Activated CD4-positive, alpha-beta T cell treated with anti-CD3 and anti-CD28 coated beads for 36 hours (primary cell): ENCODE measurements at regions of chr4 and their contacts with region 1.

Region 1: GRCh38 chr4:77025643-77026321 is 50.0 kb downstream of the CCNI start:
- DNase-seq: peak; percentile 18
- ATAC-seq: peak; percentile 86
- H3K4me3 Mint-ChIP-seq: no peak overlapping the region
- H3K27ac Mint-ChIP-seq: no peak overlapping the region
- H3K4me1 Mint-ChIP-seq: peaks cover 42% of the 10 kb centered on the region
- H3K27me3 Mint-ChIP-seq: peaks cover 8% of the 10 kb centered on the region

Region 2: DNA sequence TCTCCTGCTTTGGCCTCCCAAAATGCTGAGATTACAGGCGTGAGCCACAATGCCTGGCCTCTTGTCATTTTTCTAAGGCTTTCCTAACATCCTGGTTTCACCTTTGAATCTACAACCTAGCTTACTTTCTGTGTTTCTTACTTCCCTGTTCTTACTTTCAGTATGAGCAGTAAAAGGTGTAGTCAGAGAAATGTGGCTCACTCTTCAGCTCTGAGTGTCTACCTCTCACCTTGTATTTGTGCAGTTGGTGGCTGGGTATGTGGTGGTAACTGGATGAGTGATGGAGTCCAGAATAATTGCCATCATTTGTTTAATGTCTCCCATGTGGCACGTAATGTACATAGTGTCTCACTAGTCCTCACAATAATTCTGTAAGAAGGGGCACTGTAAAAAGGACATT is 970.8 kb before region 1 on chr4:
- CTCF ChIA-PET with region 1: no interaction called
- POLR2A ChIA-PET with region 1: no interaction called
- intact Hi-C with region 1: loop called (anchors 1 to 5 kb)
- DNase-seq: peak; percentile 54
- ATAC-seq: peak; percentile 83
- H3K4me3 Mint-ChIP-seq: no peak overlapping the region
- H3K27ac Mint-ChIP-seq: no peak overlapping the region
- H3K4me1 Mint-ChIP-seq: peaks cover 44% of the 10 kb centered on the region
- H3K27me3 Mint-ChIP-seq: peaks cover 23% of the 10 kb centered on the region

Region 3: DNA sequence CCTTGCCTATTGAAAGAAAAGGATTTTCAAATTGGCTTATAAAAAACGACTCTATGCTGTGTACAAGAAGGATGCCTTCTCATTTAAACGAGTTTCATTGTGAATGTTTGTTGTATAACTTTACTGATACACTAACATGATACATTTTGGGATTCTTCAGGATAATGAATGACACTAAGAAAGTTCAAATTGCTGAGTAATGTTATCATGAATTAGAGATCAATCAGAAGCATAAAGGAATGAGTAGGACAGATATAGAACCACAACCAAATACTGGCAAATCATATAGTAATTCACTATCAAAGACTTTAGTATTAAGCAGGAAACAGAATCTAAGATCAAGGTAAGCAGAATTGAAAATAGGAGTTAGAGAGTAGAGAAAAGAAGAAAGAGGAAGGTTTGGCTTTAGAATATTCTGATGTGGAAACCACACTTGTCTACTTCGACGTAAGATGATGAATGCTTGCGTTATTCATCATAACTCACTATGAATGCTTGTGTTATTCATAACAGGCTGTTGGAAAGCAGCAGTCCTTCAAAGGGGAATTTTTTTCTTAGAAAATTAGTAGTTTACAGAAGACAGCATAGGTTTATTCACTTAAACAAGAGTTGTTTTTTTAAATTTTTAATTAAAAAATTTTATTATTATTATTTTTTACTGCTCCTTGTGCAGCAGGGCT is 618.2 kb before region 1 on chr4:
- CTCF ChIA-PET with region 1: no interaction called
- POLR2A ChIA-PET with region 1: no interaction called
- intact Hi-C with region 1: loop called in 1 of 2 experiments (anchors 5 kb)
- DNase-seq: no peak
- ATAC-seq: peak; percentile 84
- H3K4me3 Mint-ChIP-seq: no peak overlapping the region
- H3K27ac Mint-ChIP-seq: no peak overlapping the region
- H3K4me1 Mint-ChIP-seq: peaks cover 7% of the 10 kb centered on the region
- H3K27me3 Mint-ChIP-seq: peaks cover 8% of the 10 kb centered on the region

Region 4: DNA sequence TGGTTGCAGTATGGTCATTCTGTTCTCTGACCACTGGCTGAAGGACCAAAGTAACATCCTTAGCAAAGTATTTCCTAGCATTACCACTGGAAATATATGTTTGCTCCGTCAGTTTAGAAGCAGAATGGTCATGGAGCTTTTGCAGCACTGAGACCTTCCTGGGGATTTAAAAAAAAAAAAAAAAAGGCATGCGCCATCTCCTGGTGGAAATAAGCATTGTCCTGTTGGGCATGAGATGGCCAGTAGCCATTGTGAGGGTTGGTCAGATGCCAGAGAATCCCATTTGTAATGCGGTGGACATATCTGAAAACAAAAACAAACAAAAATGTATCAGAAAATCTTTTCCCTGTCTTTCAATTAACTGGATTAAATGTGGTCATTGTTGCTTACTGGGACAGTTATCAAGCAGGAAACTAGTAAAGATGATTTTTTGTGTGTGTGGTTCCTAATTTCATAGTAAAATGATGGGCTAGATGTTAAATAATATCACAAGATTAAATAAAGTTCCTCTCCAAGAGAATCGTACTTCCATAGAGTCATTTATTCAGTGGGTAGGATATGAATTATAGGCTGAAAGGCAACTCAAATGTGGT is 267.4 kb before region 1 on chr4:
- CTCF ChIA-PET with region 1: no interaction called
- POLR2A ChIA-PET with region 1: no interaction called
- intact Hi-C with region 1: loop called (anchors 5 kb)
- DNase-seq: no peak
- ATAC-seq: no peak
- H3K4me3 Mint-ChIP-seq: no peak overlapping the region
- H3K27ac Mint-ChIP-seq: no peak overlapping the region
- H3K4me1 Mint-ChIP-seq: peaks cover 14% of the 10 kb centered on the region
- H3K27me3 Mint-ChIP-seq: peaks cover 11% of the 10 kb centered on the region

Region 5: GRCh38 chr4:76960014-76960413 is 65.8 kb before region 1 on chr4:
- CTCF ChIA-PET with region 1: no interaction called
- POLR2A ChIA-PET with region 1: no interaction called
- intact Hi-C with region 1: loop called (anchors 1 kb)
- DNase-seq: no peak
- ATAC-seq: peak; percentile 90
- H3K4me3 Mint-ChIP-seq: no peak overlapping the region
- H3K27ac Mint-ChIP-seq: no peak overlapping the region
- H3K4me1 Mint-ChIP-seq: peaks cover 23% of the 10 kb centered on the region
- H3K27me3 Mint-ChIP-seq: peaks cover 4% of the 10 kb centered on the region

Region 6: DNA sequence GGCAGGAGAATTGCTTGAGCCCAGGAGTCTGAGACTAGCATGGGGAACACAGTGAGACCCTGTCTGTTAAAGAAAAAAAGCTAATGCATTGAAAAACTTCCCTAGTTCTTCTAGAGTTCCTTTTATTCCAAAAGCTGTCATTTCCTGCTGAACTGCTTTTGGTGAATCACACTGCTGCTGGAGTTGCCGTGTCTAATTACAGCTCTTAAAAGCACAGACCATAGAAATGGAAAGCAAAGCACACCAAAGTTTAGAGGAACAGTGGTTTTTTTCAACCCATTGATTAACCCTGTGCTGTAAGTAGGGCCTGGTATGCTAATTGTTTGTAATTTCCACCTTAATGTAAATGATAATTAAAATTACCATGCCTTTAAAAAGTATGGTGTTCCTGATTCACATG is 23.9 kb before region 1 on chr4:
- CTCF ChIA-PET with region 1: interaction called, 3 read pairs
- POLR2A ChIA-PET with region 1: no interaction called
- intact Hi-C with region 1: loop called in 1 of 2 experiments (anchors 2 kb)
- DNase-seq: no peak
- ATAC-seq: no peak
- H3K4me3 Mint-ChIP-seq: no peak overlapping the region
- H3K27ac Mint-ChIP-seq: no peak overlapping the region
- H3K4me1 Mint-ChIP-seq: peaks cover 24% of the 10 kb centered on the region
- H3K27me3 Mint-ChIP-seq: no peaks in the 10 kb centered on the region

Region 7: DNA sequence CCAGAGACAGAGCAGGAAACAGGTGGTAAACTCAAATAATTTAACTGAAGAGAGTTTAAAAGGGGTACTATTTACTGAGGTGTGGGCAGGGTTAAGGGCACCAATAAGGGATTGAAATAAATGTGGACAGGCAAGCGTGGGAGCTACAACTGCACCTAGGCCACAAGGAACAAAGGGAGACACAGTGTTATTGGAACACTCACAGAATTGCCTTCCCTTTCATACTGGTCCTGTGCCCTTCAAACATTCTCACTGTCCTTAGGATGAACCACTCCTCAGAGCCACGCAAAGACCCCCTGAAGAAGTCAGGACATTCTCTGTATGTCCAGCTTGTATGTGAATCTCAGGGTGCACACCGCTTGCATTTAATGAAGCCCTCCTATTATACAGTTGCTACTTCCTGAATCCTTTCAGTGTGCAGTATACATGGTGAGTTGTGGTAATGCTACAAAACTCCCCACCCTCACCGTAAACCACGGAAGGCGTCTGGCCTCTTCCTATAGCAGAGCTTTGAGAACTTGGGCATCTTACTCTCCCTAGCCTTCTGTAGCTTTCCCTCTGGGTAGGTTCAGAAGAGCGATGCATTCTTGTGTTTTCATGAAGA is 827.2 kb after region 1 on chr4:
- CTCF ChIA-PET with region 1: no interaction called
- POLR2A ChIA-PET with region 1: no interaction called
- intact Hi-C with region 1: loop called in 1 of 2 experiments (anchors 5 kb)
- DNase-seq: peak; percentile 80
- ATAC-seq: peak; percentile 86
- H3K4me3 Mint-ChIP-seq: peak overlapping the region; percentile 64
- H3K27ac Mint-ChIP-seq: peak overlapping the region; percentile 100
- H3K4me1 Mint-ChIP-seq: peaks cover 57% of the 10 kb centered on the region
- H3K27me3 Mint-ChIP-seq: no peaks in the 10 kb centered on the region